Breast epithelium (tissue), 4 donors: ENCODE measurements at regions of chr10 and their contacts with region 1.

Region 1: GRCh38 chr10:14798636-14799035 is 23.9 kb upstream of the FAM107B start:
- DNase-seq: no peak
- H3K4me3 ChIP-seq: no peak overlapping the region
- H3K27ac ChIP-seq: no peak overlapping the region
- H3K4me1 ChIP-seq: no peaks in the 10 kb centered on the region
- H3K27me3 ChIP-seq: no peaks in the 10 kb centered on the region
- CTCF ChIP-seq: no peak
- POLR2A ChIP-seq: no peak

Region 2: GRCh38 chr10:15122477-15123030 is 323.9 kb after region 1 on chr10:
- intact Hi-C with region 1: loop called (anchors 5 kb)
- DNase-seq: no peak
- H3K4me3 ChIP-seq: no peak overlapping the region
- H3K27ac ChIP-seq: no peak overlapping the region
- H3K4me1 ChIP-seq: no peaks in the 10 kb centered on the region
- H3K27me3 ChIP-seq: no peaks in the 10 kb centered on the region
- CTCF ChIP-seq: no peak
- POLR2A ChIP-seq: no peak